ENCODE measurements at regions of chr1 and their contacts with region 1.

Region 1: DNA sequence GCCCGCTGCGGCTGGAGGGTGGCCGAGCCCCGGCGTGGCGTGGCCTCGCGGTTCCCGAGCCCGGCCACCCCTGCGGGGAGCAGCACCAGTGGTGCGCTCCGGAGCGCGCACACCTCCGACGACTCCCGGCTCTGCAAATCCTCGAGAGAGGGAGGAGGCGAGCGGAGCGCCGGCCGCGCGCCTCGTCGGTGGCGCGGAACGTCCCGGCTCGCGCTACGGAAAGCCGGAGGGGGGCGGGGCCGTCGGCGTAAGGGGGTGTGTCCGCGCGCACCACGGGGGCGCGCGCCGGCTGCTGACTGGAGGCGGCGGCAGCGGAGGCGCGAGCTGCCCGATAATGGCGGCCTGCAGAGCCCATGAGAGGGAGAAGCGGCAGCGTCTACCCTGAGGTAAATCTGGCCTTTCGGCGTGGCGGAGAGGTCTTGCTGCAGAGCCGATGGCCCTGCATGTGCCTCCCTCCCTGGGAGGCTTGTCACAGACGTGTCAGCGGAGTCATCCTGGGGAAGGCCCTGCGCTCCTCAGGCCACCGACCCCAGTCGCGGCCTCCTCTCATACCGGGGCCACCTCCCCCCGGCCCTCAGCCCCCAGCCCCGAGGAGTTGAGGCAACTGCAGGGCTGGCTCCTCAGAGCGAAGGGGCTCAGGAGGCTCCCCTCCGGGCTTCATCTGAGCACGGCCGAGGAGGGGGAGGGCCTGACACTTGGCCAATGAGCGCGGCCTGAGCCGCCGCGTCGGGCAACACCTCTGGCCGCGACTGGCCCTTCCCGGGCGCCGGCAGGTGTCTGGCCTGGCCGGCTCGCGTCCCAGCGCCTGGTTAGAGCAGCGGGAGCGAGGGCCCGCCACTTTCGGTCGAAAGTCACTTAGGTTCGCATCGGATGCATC is at the start of gene PDIK1L:
- DNase-seq: peak; percentile 93
- H3K4me3 Mint-ChIP-seq: peak within 1 kb of the TSS; percentile 85
- H3K27ac Mint-ChIP-seq: peak within 1 kb of the TSS; percentile 70
- H3K4me1 Mint-ChIP-seq: no peaks in the 10 kb centered on the region
- H3K27me3 Mint-ChIP-seq: no peaks in the 10 kb centered on the region
- CTCF ChIP-seq: no peak
- total RNA-seq, gene PDIK1L: 10.8 and 10.9 TPM in 2 replicates

Region 2: DNA sequence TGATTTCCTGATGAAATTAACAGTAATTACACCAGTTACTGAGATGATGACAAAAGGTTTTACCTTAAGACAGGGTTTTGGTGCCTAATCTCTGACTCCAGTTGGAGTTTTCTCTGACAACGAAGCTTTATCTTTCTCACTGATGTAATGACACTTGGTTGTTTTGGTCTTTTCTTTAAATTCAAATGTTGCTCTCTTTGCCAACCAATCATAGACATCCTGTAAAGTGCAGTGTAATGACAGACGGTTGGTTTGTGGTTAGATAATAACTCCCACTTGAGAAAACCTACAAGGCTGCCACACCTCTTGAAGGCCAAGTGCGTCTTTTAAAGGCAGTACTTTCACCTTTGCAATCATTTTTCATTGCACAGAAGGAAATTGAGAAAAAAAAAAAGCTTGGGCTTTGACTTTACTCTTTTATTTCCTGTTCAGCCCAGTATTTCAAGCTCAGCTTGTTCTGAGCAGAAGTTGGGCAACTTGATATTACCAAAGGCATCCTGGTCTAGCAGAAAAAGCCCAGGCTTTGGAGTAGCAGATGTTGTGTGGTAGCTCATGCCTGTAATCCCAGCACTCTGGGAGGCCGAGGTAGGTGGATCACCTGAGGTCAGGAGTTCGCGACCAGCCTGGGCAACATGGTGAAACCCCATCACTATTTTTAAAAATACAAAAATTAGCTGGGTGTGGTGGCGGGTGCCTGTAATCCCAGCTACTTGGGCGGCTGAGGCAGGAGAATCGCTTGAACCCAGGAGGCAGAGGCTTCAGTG is 14.7 kb after region 1 on chr1:
- CTCF ChIA-PET with region 1: interaction called, 5 read pairs
- POLR2A ChIA-PET with region 1: interaction called, 190 read pairs
- intact Hi-C with region 1: no loop called
- DNase-seq: peak; percentile 76
- H3K4me3 Mint-ChIP-seq: peak overlapping the region; percentile 12
- H3K27ac Mint-ChIP-seq: peak overlapping the region; percentile 84
- H3K4me1 Mint-ChIP-seq: peaks cover 22% of the 10 kb centered on the region
- H3K27me3 Mint-ChIP-seq: no peaks in the 10 kb centered on the region
- CTCF ChIP-seq: no peak

Region 3: GRCh38 chr1:26200413-26200812 is 88.6 kb after region 1 on chr1:
- CTCF ChIA-PET with region 1: no interaction called
- POLR2A ChIA-PET with region 1: no interaction called
- intact Hi-C with region 1: no loop called
- DNase-seq: no peak
- H3K4me3 Mint-ChIP-seq: no peak overlapping the region
- H3K27ac Mint-ChIP-seq: no peak overlapping the region
- H3K4me1 Mint-ChIP-seq: no peaks in the 10 kb centered on the region
- H3K27me3 Mint-ChIP-seq: peaks cover 13% of the 10 kb centered on the region
- CTCF ChIP-seq: no peak